ENCODE measurements at regions of chr4 and their contacts with region 1.

Region 1: DNA sequence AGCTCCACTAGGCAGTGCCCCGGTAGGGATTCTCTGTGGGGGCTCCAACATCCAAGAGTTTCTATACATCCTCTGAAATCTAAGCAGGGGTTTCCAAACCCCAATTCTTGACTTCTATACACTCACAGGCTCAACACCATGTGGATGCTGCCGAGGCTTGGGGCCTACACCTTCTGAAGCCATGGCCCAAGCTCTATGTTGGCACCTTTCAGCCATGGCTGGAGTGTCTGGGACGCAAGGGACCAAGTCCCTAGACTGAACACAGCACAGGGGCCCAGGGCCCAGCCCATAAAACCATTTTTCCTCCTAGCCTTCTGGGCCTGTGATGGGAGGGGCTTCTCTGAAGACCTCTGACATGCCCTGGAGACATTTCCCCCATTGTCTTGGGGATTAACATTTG is 511.8 kb downstream of the TRAM1L1 start:
- DNase-seq: no peak
- H3K4me3 ChIP-seq: no peak overlapping the region
- H3K27ac ChIP-seq: no peak overlapping the region
- H3K4me1 ChIP-seq: no peaks in the 10 kb centered on the region
- H3K27me3 ChIP-seq: no peaks in the 10 kb centered on the region
- CTCF ChIP-seq: no peak
- EP300 ChIP-seq: no peak
- POLR2A ChIP-seq: no peak

Region 2: GRCh38 chr4:116588783-116589182 is 15.2 kb after region 1 on chr4:
- in situ Hi-C with region 1: no loop called
- intact Hi-C with region 1: loop called (anchors 1 kb)
- DNase-seq: no peak
- H3K4me3 ChIP-seq: no peak overlapping the region
- H3K27ac ChIP-seq: no peak overlapping the region
- H3K4me1 ChIP-seq: no peaks in the 10 kb centered on the region
- H3K27me3 ChIP-seq: no peaks in the 10 kb centered on the region
- CTCF ChIP-seq: no peak
- EP300 ChIP-seq: no peak
- POLR2A ChIP-seq: no peak

Region 3: GRCh38 chr4:117001077-117001476 is 427.5 kb after region 1 on chr4:
- in situ Hi-C with region 1: no loop called
- intact Hi-C with region 1: no loop called
- DNase-seq: no peak
- H3K4me3 ChIP-seq: no peak overlapping the region
- H3K27ac ChIP-seq: no peak overlapping the region
- H3K4me1 ChIP-seq: no peaks in the 10 kb centered on the region
- H3K27me3 ChIP-seq: no peaks in the 10 kb centered on the region
- CTCF ChIP-seq: no peak
- EP300 ChIP-seq: no peak
- POLR2A ChIP-seq: no peak